Caco-2 (cell line): ENCODE measurements at regions of chr3 and their contacts with region 1.

Region 1: DNA sequence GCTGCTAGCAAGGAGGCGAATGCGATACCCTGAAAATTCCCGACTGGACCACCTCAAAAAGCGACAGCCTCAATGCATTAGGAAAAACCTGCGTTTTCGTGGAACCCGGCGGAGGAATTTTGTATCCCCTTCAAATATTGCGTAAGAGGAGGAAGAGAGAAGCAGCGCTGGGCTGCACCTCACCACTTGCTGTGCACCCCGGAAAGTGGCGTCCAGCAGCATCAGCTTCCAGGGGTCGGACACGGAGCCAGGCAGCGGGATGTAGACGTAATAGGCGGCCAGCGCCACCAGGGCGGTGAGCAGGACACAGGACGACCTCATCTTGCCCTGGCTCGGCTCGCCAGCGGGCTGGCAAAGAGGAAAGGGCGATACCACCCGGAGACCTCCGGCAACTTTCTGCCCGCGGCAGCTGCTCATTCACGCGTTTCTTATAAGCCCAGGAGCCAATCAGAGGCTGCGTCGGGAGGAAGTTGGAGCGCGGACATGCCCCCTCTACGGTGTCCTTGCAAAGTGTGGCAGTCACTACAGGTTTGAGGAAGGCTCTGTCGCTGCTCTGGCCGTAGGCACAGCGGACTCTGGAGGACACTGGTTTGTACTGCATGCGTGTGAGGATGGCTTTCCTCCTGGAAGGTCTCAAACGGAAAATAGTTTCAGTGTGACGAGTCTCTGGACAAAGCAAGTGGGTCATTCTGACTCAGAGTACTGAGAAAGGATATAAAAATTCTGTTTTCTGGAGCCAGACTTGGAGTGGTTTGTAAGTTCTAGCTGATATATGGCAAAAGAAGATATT is at the start of gene NCEH1:
- DNase-seq: peak; percentile 91 to 95
- H3K4me3 ChIP-seq: peak within 1 kb of the TSS; percentile 62
- H3K4me3 Mint-ChIP-seq: peak within 1 kb of the TSS; percentile 96
- H3K27ac Mint-ChIP-seq: peak within 1 kb of the TSS; percentile 91
- H3K4me1 ChIP-seq: peaks cover 21% of the 10 kb centered on the region
- H3K4me1 Mint-ChIP-seq: peaks cover 15% of the 10 kb centered on the region
- H3K27me3 ChIP-seq: no peaks in the 10 kb centered on the region
- H3K27me3 Mint-ChIP-seq: no peaks in the 10 kb centered on the region
- CTCF ChIP-seq: peak; percentile 61 to 89
- total RNA-seq, gene NCEH1: 10.1 and 15.7 TPM in 2 replicates

Region 2: GRCh38 chr3:172673210-172673679 is 37.6 kb before region 1 on chr3:
- CTCF ChIA-PET with region 1: interaction called, 15 read pairs
- POLR2A ChIA-PET with region 1: no interaction called
- intact Hi-C with region 1: loop called (anchors 1 kb)
- DNase-seq: peak; percentile 82 to 84
- H3K4me3 ChIP-seq: no peak overlapping the region
- H3K4me3 Mint-ChIP-seq: no peak overlapping the region
- H3K27ac Mint-ChIP-seq: no peak overlapping the region
- H3K4me1 ChIP-seq: no peaks in the 10 kb centered on the region
- H3K4me1 Mint-ChIP-seq: no peaks in the 10 kb centered on the region
- H3K27me3 ChIP-seq: no peaks in the 10 kb centered on the region
- H3K27me3 Mint-ChIP-seq: no peaks in the 10 kb centered on the region
- CTCF ChIP-seq: peak; percentile 69 to 71

Region 3: DNA sequence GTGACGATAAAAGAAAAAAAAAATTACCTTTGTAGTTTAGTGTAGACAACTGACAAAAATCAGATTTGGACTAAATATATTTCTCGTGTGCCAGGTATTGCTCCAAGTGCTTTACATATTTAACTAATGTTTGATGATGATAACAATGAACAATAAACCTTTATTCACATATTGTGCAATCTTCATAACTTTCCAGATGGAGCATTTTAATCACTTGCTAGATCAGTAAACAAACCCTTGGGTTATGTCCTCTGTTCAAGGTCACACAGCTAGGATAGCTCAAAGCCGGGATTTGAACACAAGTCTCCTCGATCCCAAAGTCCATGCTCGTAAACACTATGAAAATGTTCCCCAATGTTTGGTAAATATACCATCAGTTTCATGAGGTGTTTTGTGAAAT is 14.5 kb before region 1 on chr3:
- CTCF ChIA-PET with region 1: interaction called, 6 read pairs
- POLR2A ChIA-PET with region 1: interaction called, 3 read pairs
- intact Hi-C with region 1: loop called (anchors 1 kb)
- DNase-seq: no peak
- H3K4me3 ChIP-seq: no peak overlapping the region
- H3K4me3 Mint-ChIP-seq: no peak overlapping the region
- H3K27ac Mint-ChIP-seq: no peak overlapping the region
- H3K4me1 ChIP-seq: peaks cover 27% of the 10 kb centered on the region
- H3K4me1 Mint-ChIP-seq: peaks cover 17% of the 10 kb centered on the region
- H3K27me3 ChIP-seq: no peaks in the 10 kb centered on the region
- H3K27me3 Mint-ChIP-seq: no peaks in the 10 kb centered on the region
- CTCF ChIP-seq: no peak